ENCODE measurements at regions of chr7 and their contacts with region 1.

Region 1: DNA sequence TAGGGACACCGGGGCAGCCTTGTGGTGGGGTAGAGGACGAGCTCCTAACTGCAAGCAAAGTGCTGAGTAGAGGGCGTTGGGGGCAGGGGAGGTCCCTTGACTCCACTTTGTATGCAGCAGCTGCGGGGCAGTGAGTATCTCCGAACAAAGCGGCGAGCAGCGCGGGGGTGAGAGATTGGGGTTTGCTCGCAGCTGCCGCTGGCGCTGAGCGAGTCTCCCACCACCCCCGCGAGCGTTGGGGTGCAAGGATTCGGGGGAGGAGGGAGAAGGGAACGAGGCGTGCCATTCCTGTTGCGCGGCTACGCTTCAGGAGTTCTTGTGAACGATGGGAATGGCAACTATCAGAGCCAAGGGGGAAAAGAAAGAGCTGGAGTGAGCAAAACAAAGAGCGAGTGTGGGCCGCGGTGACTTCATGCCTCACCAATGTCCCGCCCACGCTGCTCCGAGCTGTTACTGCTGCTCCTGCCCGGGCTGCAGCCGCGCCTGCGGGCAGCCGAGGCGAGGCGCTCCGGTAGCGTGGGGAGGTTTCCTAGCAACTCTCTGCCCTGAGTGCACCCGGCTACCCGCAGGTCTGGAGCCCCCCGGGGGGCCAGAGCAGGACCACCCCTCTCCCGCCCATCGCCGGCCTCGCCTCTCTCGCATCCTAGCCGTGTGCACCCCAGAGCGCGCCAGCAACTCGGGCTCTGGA is at the start of gene ITGB8:
- DNase-seq: peak; percentile 86 to 87
- H3K4me3 ChIP-seq: peak within 1 kb of the TSS; percentile 63
- H3K27ac ChIP-seq: peak within 1 kb of the TSS; percentile 77
- H3K4me1 ChIP-seq: peaks cover 49% of the 10 kb centered on the region
- H3K27me3 ChIP-seq: no peaks in the 10 kb centered on the region
- CTCF ChIP-seq: no peak
- total RNA-seq, gene ITGB8: 19.4 and 20.1 TPM in 2 replicates

Region 2: DNA sequence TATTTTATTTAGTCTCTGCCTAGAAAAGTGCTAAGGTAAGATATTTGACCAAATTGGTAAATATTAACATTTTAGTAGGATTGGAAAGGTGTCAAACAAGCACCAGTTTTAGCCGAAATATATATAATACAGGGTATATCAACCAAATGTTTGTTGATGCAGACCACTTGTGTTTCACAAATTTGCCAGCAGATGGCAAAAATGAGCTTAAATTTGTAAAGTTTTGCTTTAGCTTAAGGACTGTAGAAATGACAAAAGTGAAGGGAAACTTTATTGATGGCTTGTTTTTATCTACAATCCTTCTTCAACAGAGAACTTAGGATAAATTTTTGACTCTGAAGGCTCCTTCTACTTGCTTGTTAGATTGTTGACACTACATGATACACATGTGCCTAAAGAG is 616.7 kb before region 1 on chr7:
- CTCF ChIA-PET with region 1: interaction called, 14 read pairs
- POLR2A ChIA-PET with region 1: interaction called, 8 read pairs
- intact Hi-C with region 1: loop called (anchors 5 kb)
- DNase-seq: peak; percentile 37 to 57
- H3K4me3 ChIP-seq: no peak overlapping the region
- H3K27ac ChIP-seq: no peak overlapping the region
- H3K4me1 ChIP-seq: no peaks in the 10 kb centered on the region
- H3K27me3 ChIP-seq: no peaks in the 10 kb centered on the region
- CTCF ChIP-seq: peak; percentile 81

Region 3: DNA sequence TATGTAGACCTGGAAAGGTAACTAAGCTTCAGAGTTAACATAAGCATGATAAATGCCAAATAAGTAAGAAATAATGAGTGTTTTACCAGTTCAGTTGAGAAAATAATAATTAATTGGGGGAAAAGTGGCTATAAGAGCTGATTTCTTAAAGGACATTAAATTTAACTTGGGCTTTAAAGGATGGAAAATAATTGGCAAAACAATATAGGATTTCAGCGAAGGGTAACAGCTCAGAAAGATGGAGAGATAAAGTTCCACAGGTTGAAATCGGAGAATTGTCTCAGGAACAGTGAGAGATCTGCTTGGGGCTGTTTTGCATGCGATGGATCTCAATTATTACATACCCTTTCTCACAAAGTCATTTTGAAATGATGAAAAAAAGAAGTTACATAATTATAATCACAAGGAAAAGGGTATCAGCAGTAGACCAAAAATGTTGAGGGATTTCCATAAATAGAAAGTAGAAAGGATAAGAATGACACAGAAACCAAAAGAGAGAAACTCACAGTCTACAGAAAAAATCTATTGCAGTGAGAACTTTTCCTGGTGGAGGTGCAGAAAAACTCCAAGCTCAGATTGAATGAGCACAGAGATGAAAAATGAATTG is 39.8 kb before region 1 on chr7:
- CTCF ChIA-PET with region 1: no interaction called
- POLR2A ChIA-PET with region 1: interaction called, 17 read pairs
- intact Hi-C with region 1: no loop called
- DNase-seq: no peak
- H3K4me3 ChIP-seq: no peak overlapping the region
- H3K27ac ChIP-seq: no peak overlapping the region
- H3K4me1 ChIP-seq: no peaks in the 10 kb centered on the region
- H3K27me3 ChIP-seq: no peaks in the 10 kb centered on the region
- CTCF ChIP-seq: no peak

Region 4: GRCh38 chr7:20340839-20341238 is 10.5 kb after region 1 on chr7:
- CTCF ChIA-PET with region 1: no interaction called
- POLR2A ChIA-PET with region 1: no interaction called
- intact Hi-C with region 1: loop called (anchors 1 kb)
- DNase-seq: peak; percentile 50 to 95
- H3K4me3 ChIP-seq: no peak overlapping the region
- H3K27ac ChIP-seq: peak overlapping the region; percentile 59
- H3K4me1 ChIP-seq: peaks cover 17% of the 10 kb centered on the region
- H3K27me3 ChIP-seq: no peaks in the 10 kb centered on the region
- CTCF ChIP-seq: no peak

Region 5: DNA sequence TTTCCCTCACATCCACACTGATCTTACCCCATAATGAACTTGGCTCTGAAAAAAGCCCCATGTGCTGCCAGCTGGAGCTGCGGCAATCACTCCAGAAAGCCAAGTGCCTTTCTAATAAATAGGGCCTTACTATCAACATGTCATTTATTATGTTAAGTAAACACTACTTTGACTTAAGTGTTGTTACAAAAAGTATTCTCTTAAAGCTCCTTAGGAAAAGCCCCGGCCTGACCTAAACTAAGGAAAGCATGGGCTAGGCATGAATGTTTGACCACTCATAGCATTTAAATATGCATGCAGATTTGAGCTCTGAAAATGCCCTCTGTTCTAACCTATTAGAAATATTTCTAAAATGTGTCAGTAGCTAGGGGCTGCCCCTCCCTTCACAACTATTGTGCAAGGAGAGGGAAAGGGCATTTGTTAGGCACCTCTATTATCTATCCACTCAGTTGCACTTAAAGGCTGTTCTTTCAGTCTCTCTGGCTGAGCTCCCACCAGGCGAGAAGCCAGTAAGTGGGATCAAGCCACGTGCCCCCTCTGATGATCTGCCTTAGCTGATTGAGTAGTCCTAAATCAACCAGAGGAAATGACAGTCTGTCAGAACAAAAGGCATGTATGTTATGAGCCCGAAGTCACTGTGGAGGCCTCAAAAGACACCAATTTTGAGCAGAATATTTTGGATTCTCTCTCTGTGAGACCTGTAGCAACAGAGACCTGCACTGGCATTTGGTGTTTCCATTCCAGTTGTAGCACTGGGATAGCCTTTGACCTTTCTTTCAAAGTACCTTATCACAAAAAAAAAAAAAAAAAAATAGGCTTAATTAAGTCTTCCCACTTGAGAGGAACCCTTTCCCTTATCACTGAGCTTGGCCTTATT is 77.4 kb after region 1 on chr7:
- CTCF ChIA-PET with region 1: no interaction called
- POLR2A ChIA-PET with region 1: interaction called, 10 read pairs
- intact Hi-C with region 1: loop called (anchors 2 kb)
- DNase-seq: peak; percentile 59 to 91
- H3K4me3 ChIP-seq: no peak overlapping the region; the same call in 1 of the 2 replicates
- H3K27ac ChIP-seq: peak overlapping the region; percentile 72
- H3K4me1 ChIP-seq: peaks cover 30% of the 10 kb centered on the region
- H3K27me3 ChIP-seq: no peaks in the 10 kb centered on the region
- CTCF ChIP-seq: no peak

Region 6: DNA sequence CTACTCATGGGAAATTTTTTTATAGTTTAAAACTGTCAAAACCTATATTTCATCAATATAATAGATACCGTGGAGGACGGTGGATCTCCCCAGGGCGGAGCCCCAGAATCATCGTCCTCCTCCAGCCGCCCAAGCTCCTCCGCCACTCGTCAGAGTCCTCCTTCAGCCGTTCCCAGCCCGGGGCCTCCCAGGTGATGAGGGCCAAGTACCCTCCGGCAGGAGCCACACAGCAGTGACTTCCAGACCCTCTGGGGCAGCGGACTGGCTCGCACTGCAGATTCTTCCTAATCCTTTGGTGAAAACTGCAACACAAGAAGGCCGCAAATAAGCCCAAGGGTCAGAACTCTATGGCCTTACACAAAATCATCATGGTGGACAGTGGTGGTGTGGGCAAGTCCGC is 258.3 kb after region 1 on chr7:
- CTCF ChIA-PET with region 1: no interaction called
- POLR2A ChIA-PET with region 1: no interaction called
- intact Hi-C with region 1: no loop called
- DNase-seq: no peak
- H3K4me3 ChIP-seq: no peak overlapping the region
- H3K27ac ChIP-seq: no peak overlapping the region
- H3K4me1 ChIP-seq: no peaks in the 10 kb centered on the region
- H3K27me3 ChIP-seq: no peaks in the 10 kb centered on the region
- CTCF ChIP-seq: no peak